Activated CD4-positive, alpha-beta T cell treated with anti-CD3 and anti-CD28 coated beads for 36 hours (primary cell): ENCODE measurements at regions of chr1 and their contacts with region 1.

Region 1: DNA sequence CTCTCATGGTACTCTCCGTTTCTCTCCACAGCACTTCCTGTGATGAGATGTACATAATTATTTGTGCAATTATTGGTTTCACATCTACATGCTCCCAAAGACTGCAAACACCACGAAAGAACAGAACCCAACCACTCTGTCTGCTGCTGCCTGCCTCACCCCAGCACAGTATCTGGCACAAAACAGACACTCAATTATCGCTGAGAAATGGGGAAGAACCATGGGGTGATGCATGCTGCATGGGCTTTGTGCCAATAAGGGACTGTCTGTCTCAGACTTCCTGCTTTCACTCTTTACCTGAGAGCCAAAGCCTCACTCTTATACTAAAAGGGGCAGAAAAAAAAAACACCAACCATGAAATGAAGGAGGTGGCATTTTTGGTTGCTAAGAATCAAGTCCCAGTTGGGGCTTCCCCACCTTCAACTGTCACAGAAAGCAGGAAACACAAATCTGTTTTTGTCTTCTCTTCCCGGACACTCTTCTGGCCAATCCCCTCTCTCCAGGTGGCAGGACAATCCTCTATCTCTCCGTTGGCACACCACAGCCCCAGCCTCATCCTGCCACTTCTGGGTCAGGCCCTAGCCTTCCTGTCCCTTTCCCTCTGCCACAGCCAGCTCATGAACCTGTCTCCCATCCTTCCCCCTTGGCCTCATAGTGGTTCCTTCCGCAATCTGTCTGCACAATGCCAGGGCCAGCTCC is 82.0 kb downstream of the TGFBR3 start:
- DNase-seq: peak; percentile 86
- ATAC-seq: peak; percentile 80
- H3K4me3 Mint-ChIP-seq: peak overlapping the region; percentile 56
- H3K27ac Mint-ChIP-seq: peak overlapping the region; percentile 90
- H3K4me1 Mint-ChIP-seq: peaks cover 39% of the 10 kb centered on the region
- H3K27me3 Mint-ChIP-seq: peaks cover 1% of the 10 kb centered on the region

Region 2: GRCh38 chr1:91511386-91511785 is 292.6 kb before region 1 on chr1:
- CTCF ChIA-PET with region 1: no interaction called
- POLR2A ChIA-PET with region 1: no interaction called
- intact Hi-C with region 1: no loop called
- DNase-seq: no peak
- ATAC-seq: no peak
- H3K4me3 Mint-ChIP-seq: no peak overlapping the region
- H3K27ac Mint-ChIP-seq: no peak overlapping the region
- H3K4me1 Mint-ChIP-seq: peaks cover 6% of the 10 kb centered on the region
- H3K27me3 Mint-ChIP-seq: no peaks in the 10 kb centered on the region

Region 3: GRCh38 chr1:91673613-91674012 is 130.4 kb before region 1 on chr1:
- CTCF ChIA-PET with region 1: no interaction called
- POLR2A ChIA-PET with region 1: interaction called, 4 read pairs
- intact Hi-C with region 1: loop called (anchors 1 kb)
- DNase-seq: no peak
- ATAC-seq: no peak
- H3K4me3 Mint-ChIP-seq: no peak overlapping the region
- H3K27ac Mint-ChIP-seq: peak overlapping the region; percentile 84
- H3K4me1 Mint-ChIP-seq: peaks cover 34% of the 10 kb centered on the region
- H3K27me3 Mint-ChIP-seq: no peaks in the 10 kb centered on the region

Region 4: GRCh38 chr1:91712981-91713841 is 90.8 kb before region 1 on chr1:
- CTCF ChIA-PET with region 1: interaction called, 4 read pairs
- POLR2A ChIA-PET with region 1: interaction called, 3 read pairs
- intact Hi-C with region 1: loop called (anchors 1 kb)
- DNase-seq: peak; percentile 75
- ATAC-seq: peak; percentile 91
- H3K4me3 Mint-ChIP-seq: peak overlapping the region; percentile 6
- H3K27ac Mint-ChIP-seq: peak overlapping the region; percentile 72
- H3K4me1 Mint-ChIP-seq: peaks cover 30% of the 10 kb centered on the region
- H3K27me3 Mint-ChIP-seq: no peaks in the 10 kb centered on the region

Region 5: GRCh38 chr1:91732291-91733107 is 71.5 kb before region 1 on chr1:
- CTCF ChIA-PET with region 1: no interaction called
- POLR2A ChIA-PET with region 1: no interaction called
- intact Hi-C with region 1: loop called (anchors 1 kb)
- DNase-seq: peak; percentile 58
- ATAC-seq: peak; percentile 47
- H3K4me3 Mint-ChIP-seq: no peak overlapping the region
- H3K27ac Mint-ChIP-seq: peak overlapping the region; percentile 89
- H3K4me1 Mint-ChIP-seq: peaks cover 48% of the 10 kb centered on the region
- H3K27me3 Mint-ChIP-seq: peaks cover 5% of the 10 kb centered on the region

Region 6: GRCh38 chr1:91754348-91754747 is 49.6 kb before region 1 on chr1:
- CTCF ChIA-PET with region 1: interaction called, 3 read pairs
- POLR2A ChIA-PET with region 1: interaction called, 4 read pairs
- intact Hi-C with region 1: loop called (anchors 1 kb)
- DNase-seq: peak; percentile 75
- ATAC-seq: peak; percentile 87
- H3K4me3 Mint-ChIP-seq: peak overlapping the region; percentile 21
- H3K27ac Mint-ChIP-seq: peak overlapping the region; percentile 82
- H3K4me1 Mint-ChIP-seq: peaks cover 43% of the 10 kb centered on the region
- H3K27me3 Mint-ChIP-seq: peaks cover 7% of the 10 kb centered on the region

Region 7: GRCh38 chr1:91885716-91886506 is 81.9 kb after region 1 on chr1 and contains the start of gene TGFBR3:
- CTCF ChIA-PET with region 1: interaction called, 9 read pairs
- POLR2A ChIA-PET with region 1: interaction called, 5 read pairs
- intact Hi-C with region 1: loop called in 1 of 2 experiments (anchors 2 kb)
- DNase-seq: peak; percentile 76
- ATAC-seq: peak; percentile 70
- H3K4me3 Mint-ChIP-seq: peak within 1 kb of the TSS; percentile 87
- H3K27ac Mint-ChIP-seq: peak within 1 kb of the TSS; percentile 80
- H3K4me1 Mint-ChIP-seq: peaks cover 38% of the 10 kb centered on the region
- H3K27me3 Mint-ChIP-seq: peaks cover 16% of the 10 kb centered on the region
- total RNA-seq, gene TGFBR3: 4.2 to 4.5 TPM

Region 8: DNA sequence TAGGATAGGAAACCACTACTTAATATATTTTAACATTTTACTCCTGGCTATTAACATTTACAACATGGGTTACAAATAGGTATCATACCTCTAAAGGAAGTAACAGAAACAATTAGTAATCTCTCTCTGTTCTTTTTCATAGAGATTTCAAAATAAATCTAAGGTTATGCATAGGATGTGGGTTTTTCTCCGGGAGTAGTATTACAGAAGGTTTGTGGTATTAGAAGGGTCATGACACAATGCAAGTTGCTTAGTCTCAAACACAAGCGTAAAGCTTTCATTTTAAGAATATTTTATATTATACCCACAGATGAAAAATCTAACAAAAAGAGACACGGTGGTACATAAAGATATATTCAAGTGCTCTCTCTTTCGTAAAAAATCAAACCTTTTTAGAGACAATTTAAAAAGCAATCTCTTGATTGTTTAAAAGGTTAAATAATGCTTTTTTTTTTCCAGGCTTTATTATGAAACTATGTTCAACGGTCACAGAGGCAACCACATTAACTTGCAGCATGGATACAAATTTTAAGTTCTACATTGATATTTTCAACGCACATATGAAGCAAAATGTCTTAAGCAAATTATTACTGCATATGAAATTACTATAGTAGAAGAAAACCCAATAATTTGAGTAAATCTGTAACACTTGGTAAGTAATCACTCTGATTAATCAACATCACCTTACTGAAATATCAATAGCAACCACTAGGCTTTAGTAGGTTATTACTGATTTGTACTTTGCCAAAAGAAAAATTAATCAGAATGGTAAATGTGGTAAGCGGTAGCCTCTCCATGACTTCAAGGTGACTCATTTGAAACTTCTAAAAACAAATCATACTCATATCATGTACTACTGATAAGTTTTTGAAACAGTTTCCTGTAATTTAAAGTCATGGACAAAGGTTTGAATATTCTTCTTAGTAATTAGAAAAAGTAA is 780.1 kb after region 1 on chr1:
- CTCF ChIA-PET with region 1: no interaction called
- POLR2A ChIA-PET with region 1: no interaction called
- intact Hi-C with region 1: loop called in 1 of 2 experiments (anchors 2 kb)
- DNase-seq: no peak
- ATAC-seq: peak; percentile 60
- H3K4me3 Mint-ChIP-seq: peak overlapping the region; percentile 68
- H3K27ac Mint-ChIP-seq: peak overlapping the region; percentile 92
- H3K4me1 Mint-ChIP-seq: peaks cover 79% of the 10 kb centered on the region
- H3K27me3 Mint-ChIP-seq: no peaks in the 10 kb centered on the region